ENCODE measurements at regions of chr9 and their contacts with region 1.

Region 1: GRCh38 chr9:90914868-90915483 is 113.4 kb downstream of the SYK start:
- DNase-seq: peak; percentile 58 to 91 (median 80)
- ATAC-seq: peak; percentile 95 to 99 (median 98)
- H3K4me3 ChIP-seq: no peak overlapping the region
- H3K27ac ChIP-seq: no peak overlapping the region
- H3K4me1 ChIP-seq: no peaks in the 10 kb centered on the region
- H3K27me3 ChIP-seq: no peaks in the 10 kb centered on the region
- CTCF ChIP-seq: peak; percentile 89 to 95 (median 91)

Region 2: DNA sequence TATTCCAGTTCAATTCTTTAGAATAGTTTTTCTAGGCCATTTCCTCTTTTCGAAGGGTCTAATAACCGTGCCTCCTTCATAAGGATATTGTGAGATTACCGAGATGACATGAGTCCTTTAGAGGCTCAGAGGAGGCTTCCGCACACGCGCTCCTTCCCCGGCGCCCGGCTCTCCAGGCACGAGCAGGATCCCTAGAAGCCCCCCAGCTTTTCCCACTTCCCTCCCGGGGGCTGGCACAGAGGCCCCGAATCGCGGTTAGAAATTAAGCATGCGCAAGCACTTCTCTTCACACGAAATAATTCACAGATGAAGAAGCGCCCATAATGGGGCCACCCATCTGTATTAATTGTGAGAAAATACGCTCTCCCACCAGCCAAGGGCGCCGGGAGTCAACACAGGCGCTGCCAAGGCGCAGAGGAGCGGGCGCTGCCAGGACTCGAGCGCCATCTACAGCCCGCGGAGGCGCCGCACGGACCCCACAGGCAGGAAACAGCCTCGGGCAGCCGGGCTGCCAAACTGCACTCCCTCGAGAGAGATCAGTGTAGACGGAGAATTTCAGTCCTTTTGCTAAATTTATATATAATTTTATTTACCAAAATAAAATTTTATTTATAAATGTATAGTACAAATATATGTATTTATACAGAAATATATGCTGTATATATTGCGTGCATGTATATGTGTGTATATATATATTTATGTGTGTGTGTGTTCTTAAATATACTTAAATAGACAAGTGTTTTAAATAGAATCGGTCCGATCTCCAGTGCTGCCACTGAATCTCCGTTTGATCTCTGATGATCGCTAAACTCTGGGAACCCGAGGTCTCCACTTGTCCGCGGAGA is 766.7 kb after region 1 on chr9:
- intact Hi-C with region 1: loop called in 1 of 3 experiments (anchors 10 kb)
- DNase-seq: peak; percentile 60 to 93 (median 84)
- ATAC-seq: peak; percentile 99 to 100 (median 100)
- H3K4me3 ChIP-seq: no peak overlapping the region
- H3K27ac ChIP-seq: no peak overlapping the region
- H3K4me1 ChIP-seq: no peaks in the 10 kb centered on the region
- H3K27me3 ChIP-seq: no peaks in the 10 kb centered on the region
- CTCF ChIP-seq: peak; percentile 74 to 88 (median 84)

Region 3: GRCh38 chr9:91727316-91727861 is 812.4 kb after region 1 on chr9:
- intact Hi-C with region 1: loop called in 1 of 3 experiments (anchors 10 kb)
- DNase-seq: peak in 2 of 6 donors; percentile 15 to 49
- ATAC-seq: peak; percentile 82 to 98 (median 90)
- H3K4me3 ChIP-seq: no peak overlapping the region
- H3K27ac ChIP-seq: no peak overlapping the region
- H3K4me1 ChIP-seq: no peaks in the 10 kb centered on the region
- H3K27me3 ChIP-seq: no peaks in the 10 kb centered on the region
- CTCF ChIP-seq: peak; percentile 63 to 76 (median 66)